ENCODE measurements at regions of chr21 and their contacts with region 1.

Region 1: GRCh38 chr21:34227386-34227852 is 136.4 kb upstream of the KCNE2 start:
- DNase-seq: no peak

Region 2: GRCh38 chr21:34180826-34181359 is 46.5 kb before region 1 on chr21:
- intact Hi-C with region 1: no loop called
- DNase-seq: no peak

Region 3: DNA sequence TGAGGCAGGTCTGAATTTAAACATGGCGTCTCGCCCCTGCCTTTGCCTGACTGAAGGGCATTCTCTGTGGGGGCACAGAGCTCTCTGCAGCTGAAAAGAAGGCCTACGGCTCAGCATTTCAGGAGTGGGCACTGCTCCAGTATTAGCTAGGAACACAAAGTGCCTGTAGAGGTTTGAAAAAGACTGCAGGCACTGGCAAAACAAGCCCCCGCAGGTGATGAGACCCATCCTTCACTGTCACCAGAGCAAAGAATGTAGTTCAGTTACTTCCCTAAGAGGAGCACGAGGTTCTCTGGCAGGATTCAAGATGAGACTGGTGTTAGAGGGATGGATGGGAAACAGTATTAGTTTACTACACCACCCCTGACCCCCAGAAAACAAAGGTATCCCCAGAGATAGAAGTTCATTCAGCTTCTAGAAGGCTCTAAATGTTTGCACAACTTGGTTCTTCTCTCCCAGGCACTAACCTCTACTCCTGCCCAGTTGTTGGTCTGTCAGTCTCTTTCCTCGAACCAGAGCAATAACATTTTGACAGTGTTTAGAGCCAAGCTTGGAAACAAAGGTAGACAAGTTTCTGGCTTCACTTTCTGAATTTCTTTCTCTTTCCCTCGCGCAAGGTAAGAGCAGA is 34.5 kb after region 1 on chr21:
- intact Hi-C with region 1: no loop called
- DNase-seq: no peak

Region 4: DNA sequence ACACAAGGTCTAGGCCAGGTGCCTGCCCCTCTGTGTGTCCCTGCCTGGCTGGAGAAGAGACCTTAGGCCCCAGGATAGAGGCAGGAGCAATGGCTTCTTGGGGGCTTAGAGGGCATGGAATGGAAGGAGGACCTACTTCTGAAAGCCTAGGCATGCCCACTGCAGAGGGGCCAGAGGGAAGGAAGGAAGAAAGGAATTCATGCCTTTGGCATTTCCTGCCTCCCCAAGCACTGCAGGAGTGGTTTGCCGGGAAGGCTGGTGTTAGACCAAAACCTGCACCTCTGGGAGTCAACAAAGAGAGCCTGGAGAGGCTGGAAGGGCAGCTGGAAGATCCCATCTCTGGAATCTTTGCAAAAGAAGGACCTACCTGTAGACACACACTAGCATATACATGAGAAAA is 85.7 kb after region 1 on chr21:
- intact Hi-C with region 1: loop called in 1 of 2 experiments (anchors 10 kb)
- DNase-seq: no peak

Measured in posterior vena cava (tissue), 2 donors.